Activated naive CD4-positive, alpha-beta T cell treated with anti-CD3 and anti-CD28 coated beads for 36 hours (primary cell): ENCODE measurements at regions of chr3 and their contacts with region 1.

Region 1: GRCh38 chr3:58052373-58053273 is 44.4 kb downstream of the FLNB start:
- DNase-seq: peak; percentile 72
- H3K4me3 Mint-ChIP-seq: no peak overlapping the region
- H3K27ac Mint-ChIP-seq: no peak overlapping the region
- H3K4me1 Mint-ChIP-seq: peaks cover 29% of the 10 kb centered on the region
- H3K27me3 Mint-ChIP-seq: no peaks in the 10 kb centered on the region

Region 2: DNA sequence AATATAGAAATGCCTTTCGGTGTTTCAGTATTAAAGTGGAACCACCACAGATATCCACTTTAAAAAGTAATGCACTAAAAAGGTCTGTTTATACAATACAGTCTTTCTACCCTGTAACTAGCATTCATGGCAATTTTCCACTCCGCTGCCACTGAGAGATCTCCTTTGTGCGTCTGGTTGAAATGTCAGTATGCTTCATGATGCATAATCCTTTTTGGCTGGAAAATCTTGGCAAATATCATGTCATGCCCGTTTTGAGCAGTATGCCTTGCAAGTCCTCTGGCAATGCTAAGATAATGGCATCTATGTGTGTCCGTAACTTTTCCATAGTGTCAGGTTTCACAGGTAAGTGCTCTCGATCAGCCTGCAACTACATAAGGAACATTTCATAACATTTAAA is 424.6 kb before region 1 on chr3:
- CTCF ChIA-PET with region 1: no interaction called
- intact Hi-C with region 1: no loop called
- DNase-seq: no peak
- H3K4me3 Mint-ChIP-seq: no peak overlapping the region
- H3K27ac Mint-ChIP-seq: no peak overlapping the region
- H3K4me1 Mint-ChIP-seq: no peaks in the 10 kb centered on the region
- H3K27me3 Mint-ChIP-seq: no peaks in the 10 kb centered on the region

Region 3: GRCh38 chr3:58082047-58082446 is 29.4 kb after region 1 on chr3:
- CTCF ChIA-PET with region 1: no interaction called
- intact Hi-C with region 1: loop called (anchors 1 kb)
- DNase-seq: peak; percentile 73
- H3K4me3 Mint-ChIP-seq: peak overlapping the region; percentile 23
- H3K27ac Mint-ChIP-seq: peak overlapping the region; percentile 79
- H3K4me1 Mint-ChIP-seq: peaks cover 63% of the 10 kb centered on the region
- H3K27me3 Mint-ChIP-seq: no peaks in the 10 kb centered on the region

Region 4: GRCh38 chr3:58116161-58116955 is 63.7 kb after region 1 on chr3:
- CTCF ChIA-PET with region 1: no interaction called
- intact Hi-C with region 1: loop called (anchors 2 kb)
- DNase-seq: peak; percentile 51
- H3K4me3 Mint-ChIP-seq: no peak overlapping the region
- H3K27ac Mint-ChIP-seq: peak overlapping the region; percentile 27
- H3K4me1 Mint-ChIP-seq: peaks cover 26% of the 10 kb centered on the region
- H3K27me3 Mint-ChIP-seq: no peaks in the 10 kb centered on the region